ENCODE measurements at regions of chr3 and their contacts with region 1.

Region 1: DNA sequence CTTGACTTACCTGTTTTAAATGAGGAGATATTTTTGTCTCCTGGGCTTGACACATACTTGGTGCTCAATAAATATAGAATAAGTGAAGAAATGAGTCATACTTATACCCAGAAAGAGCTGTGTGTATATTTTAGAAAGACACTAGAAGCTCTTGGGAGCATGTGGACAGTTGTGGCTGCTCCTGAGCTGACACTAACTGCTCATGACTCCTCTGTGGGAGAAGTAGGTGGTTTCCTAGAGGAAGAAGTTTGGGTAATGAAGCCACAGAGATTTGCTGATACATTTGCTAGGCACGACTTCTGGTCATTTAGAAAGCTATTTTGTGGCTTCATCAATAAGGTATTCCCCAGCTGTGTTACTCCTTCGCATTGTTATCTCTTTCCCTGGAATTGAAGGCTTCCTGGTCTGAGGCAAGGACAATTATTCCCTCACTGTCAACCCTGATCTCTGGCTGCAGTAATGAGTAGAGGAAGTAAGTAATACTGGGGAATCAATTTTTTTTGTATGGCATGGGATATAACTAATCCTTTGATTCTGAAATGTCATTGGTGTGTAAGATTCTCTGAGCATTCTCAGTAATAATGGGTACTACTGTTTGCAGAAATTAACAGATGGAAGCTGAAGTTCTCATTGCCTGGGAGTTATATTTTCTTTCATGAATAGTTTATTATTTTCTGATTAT is 79.6 kb upstream of the DCBLD2 start:
- DNase-seq: no peak
- H3K4me3 ChIP-seq: no peak overlapping the region
- H3K27ac ChIP-seq: 0 out of 2 replicates have a peak overlapping the region, but pooled peaks have one; percentile 7
- H3K4me1 ChIP-seq: peaks cover 29% of the 10 kb centered on the region
- H3K27me3 ChIP-seq: no peaks in the 10 kb centered on the region
- CTCF ChIP-seq: no peak

Region 2: GRCh38 chr3:98513091-98513511 is 468.0 kb before region 1 on chr3:
- CTCF ChIA-PET with region 1: no interaction called
- POLR2A ChIA-PET with region 1: no interaction called
- intact Hi-C with region 1: loop called (anchors 10 kb)
- DNase-seq: peak; percentile 81 to 100
- H3K4me3 ChIP-seq: 0 out of 2 replicates have a peak overlapping the region, but pooled peaks have one; percentile 19
- H3K27ac ChIP-seq: peak overlapping the region; percentile 87
- H3K4me1 ChIP-seq: peaks cover 50% of the 10 kb centered on the region
- H3K27me3 ChIP-seq: no peaks in the 10 kb centered on the region
- CTCF ChIP-seq: no peak

Region 3: DNA sequence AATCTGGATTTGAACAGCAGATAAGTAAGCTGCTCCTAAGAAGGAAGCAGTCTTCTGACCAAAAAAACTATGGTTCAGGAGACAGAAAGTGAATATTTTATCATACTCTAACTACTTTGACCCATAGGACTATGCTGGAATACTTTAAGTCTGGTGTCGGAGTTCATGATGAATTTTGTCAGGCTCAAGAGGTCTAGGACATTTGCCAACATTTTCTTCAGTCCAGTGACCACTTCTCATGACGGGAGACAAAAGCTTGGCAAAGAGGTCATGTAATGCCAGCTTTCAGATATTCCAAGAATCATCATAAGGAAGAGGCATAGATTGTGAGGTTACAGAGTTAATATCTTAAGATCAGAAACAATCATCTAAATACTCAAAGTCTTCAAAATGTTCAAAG is 59.1 kb before region 1 on chr3:
- CTCF ChIA-PET with region 1: no interaction called
- POLR2A ChIA-PET with region 1: no interaction called
- intact Hi-C with region 1: loop called (anchors 2 kb)
- DNase-seq: no peak
- H3K4me3 ChIP-seq: no peak overlapping the region
- H3K27ac ChIP-seq: peak overlapping the region; percentile 96
- H3K4me1 ChIP-seq: peaks cover 39% of the 10 kb centered on the region
- H3K27me3 ChIP-seq: no peaks in the 10 kb centered on the region
- CTCF ChIP-seq: no peak

Region 4: GRCh38 chr3:99084826-99085225 is 103.8 kb after region 1 on chr3:
- CTCF ChIA-PET with region 1: no interaction called
- POLR2A ChIA-PET with region 1: no interaction called
- intact Hi-C with region 1: no loop called
- DNase-seq: peak in 1 of 2 experiments; percentile 34
- H3K4me3 ChIP-seq: no peak overlapping the region
- H3K27ac ChIP-seq: no peak overlapping the region
- H3K4me1 ChIP-seq: no peaks in the 10 kb centered on the region
- H3K27me3 ChIP-seq: no peaks in the 10 kb centered on the region
- CTCF ChIP-seq: no peak